Left cardiac atrium (tissue), 4 donors: ENCODE measurements at regions of chr2 and their contacts with region 1.

Region 1: DNA sequence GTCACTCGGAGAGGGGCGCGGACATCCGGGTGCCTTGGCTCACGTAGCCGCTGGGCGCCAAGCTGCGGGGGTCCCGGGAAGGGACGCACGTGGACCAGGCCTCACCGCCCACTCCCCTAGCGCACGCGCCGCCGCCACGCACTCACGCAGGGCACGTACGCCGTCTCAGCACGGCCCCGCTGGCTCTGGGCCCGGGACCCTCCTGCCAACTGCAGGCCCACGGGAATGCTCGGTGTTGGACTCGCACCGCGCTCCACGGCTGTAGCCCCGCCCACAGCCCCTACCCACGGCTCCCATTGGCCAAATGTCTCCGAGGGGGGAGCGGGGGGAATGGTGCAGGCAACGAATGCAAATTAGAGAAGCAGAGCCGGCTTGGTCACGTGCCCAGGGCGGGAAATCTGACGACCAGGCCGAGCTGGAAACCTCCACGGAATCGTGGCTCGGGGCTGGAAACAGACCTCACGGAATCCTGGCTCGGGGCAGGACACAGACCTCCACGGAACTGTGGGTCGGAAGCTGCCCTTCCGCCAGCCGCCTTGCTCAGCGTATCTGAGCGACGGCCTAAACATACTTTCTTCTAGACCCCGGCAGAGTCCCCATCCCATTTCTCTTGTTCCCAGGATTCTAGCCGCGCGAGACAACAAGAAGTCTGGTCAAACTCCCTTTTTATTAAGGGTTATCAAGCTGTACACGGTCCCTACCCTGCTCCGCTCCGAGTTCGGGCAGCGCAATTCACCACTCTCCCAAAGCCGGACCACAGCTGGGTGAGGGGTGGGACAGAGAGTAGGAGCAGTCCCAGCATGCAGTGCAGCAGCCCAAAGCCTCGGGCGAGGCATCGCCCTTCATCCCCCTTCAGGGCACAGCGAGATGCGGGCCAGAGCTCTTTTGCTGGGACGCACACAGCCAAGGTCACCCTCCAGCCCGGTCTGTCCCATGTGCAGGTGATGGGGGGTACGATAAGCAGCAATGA is at the start of gene ABCB6:
- DNase-seq: peak; percentile 99
- ATAC-seq: peak; percentile 91
- total RNA-seq, gene ABCB6: 14.2 to 23.0 TPM

Region 2: GRCh38 chr2:218710687-218711549 is 508.1 kb before region 1 on chr2 and contains the start of gene TTLL4:
- intact Hi-C with region 1: no loop called
- DNase-seq: peak; percentile 99
- ATAC-seq: peak; percentile 98 to 99
- total RNA-seq, gene TTLL4: 8.0 to 12.3 TPM

Region 3: GRCh38 chr2:219177552-219178376 is 41.3 kb before region 1 on chr2 and contains the start of gene RETREG2:
- intact Hi-C with region 1: loop called (anchors 5 kb)
- DNase-seq: peak; percentile 90
- ATAC-seq: peak; percentile 81 to 90
- total RNA-seq, gene RETREG2: 43.4 to 46.0 TPM

Region 4: DNA sequence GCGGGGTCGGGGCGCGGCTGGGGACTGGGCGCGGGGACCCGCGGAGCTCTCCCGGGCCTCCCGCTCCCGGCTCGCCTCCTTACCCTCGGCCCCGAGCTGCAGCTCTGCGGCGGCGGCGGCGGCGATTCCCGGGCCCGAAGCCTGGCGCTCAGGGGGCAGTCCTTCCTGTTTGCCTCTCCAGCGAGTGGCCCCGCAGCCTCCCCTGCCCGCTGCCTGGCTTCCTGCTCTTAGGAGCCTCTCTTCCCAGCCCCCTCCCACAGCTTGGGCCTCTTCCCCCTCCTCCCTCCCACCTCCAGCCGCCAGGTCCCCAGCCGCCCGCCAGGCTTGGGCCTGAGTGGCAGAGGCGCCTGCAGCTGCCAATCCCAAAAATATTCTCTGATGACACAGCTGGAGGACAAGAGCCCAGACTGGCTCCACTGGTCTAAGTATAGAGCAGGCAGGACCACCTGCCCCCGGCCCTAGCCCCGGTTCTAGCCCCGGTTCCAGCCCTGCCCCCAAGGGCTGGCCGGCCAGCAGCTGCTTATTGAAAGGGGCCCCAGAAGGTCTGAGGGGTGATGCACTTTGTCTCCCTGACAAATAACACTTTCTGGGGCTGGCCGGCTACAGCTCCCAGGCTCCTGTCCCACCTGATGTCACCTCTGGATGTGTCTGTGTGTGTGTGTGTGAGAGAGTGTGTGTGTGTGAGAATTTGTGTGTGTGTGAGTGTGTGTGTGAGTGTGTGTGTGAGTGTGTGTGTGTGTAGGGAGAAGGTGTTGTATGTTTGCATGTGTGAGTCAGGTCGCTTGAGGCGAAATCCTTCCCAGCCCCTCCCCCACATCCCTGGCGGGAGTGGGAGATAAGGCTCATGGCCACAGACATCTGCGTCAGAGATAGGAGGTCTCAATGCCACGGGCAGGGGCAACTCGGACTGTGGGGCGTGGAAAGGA is 352.6 kb after region 1 on chr2 and contains the start of gene OBSL1:
- intact Hi-C with region 1: no loop called
- DNase-seq: peak; percentile 87
- ATAC-seq: peak; percentile 81 to 88
- total RNA-seq, gene OBSL1: 121 to 187 TPM